HepG2 (cell line): ENCODE measurements at regions of chr3 and their contacts with region 1.

Region 1: GRCh38 chr3:172601066-172601832 is 78.0 kb upstream of the TNFSF10 start:
- DNase-seq: peak; percentile 87
- ATAC-seq: peak; percentile 99
- H3K4me3 ChIP-seq: peak overlapping the region; percentile 24 to 55 (median 40); a peak in 4 of 6 replicates
- H3K27ac ChIP-seq: peak overlapping the region; percentile 86
- H3K4me1 ChIP-seq: peaks cover 38% of the 10 kb centered on the region
- H3K27me3 ChIP-seq: no peaks in the 10 kb centered on the region
- CTCF ChIP-seq: no peak
- EP300 ChIP-seq: peak in 1 of 2 experiments; percentile 76; a peak in 2 of 4 replicates
- POLR2A ChIP-seq: peak in 1 of 2 experiments; percentile 32; a peak in 1 of 4 replicates
- RAD21 ChIP-seq: no peak

Region 2: DNA sequence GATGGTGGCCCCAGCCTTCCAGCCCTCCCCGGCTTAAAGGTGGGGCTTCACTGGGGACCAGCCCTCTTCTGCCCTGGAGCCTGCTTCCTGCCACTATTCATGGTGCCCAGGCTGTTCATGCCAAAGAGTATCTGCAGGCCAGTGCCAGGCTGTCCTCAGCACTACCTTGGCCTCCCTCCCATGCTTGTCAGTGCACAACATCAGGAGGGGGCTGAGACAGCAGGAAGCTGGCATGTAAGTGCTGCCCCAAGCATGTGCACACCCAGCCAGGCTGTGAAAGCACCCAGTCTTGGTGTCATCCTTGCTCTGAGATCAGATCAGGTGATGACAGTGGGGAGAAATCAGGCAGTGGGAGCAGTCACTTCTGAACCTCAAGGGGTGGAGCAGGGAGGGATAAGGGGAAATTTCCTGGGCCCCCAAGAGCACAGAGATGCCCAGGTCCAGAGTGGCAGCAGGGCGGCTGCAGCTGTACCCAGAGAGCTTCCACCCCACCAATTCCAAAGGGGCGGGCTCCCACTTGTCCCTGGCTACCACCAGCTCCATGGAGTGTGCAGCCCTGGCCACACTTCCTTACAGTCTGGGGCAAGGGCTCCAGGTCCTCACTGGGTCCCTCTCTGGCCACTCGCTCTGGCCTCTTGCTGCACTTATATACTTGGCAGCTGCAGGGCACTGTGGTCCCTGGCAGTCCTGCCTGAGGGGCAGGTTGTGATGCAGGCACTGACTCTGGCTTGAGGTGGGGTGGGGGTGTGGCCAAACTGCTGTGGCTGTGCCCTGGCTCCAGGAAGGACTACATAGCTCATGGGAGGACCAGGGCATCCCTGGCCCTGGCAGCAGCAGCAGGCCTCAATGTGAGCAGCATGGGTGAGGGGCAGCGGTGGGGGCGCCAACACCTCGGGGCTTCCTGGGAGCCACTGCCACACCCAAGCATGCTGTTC is 13.4 kb after region 1 on chr3:
- CTCF ChIA-PET with region 1: no interaction called
- POLR2A ChIA-PET with region 1: interaction called, 20 read pairs
- in situ Hi-C with region 1: no loop called
- intact Hi-C with region 1: loop called (anchors 1 kb)
- DNase-seq: no peak
- ATAC-seq: peak; percentile 26
- H3K4me3 ChIP-seq: no peak overlapping the region
- H3K27ac ChIP-seq: no peak overlapping the region
- H3K4me1 ChIP-seq: peaks cover 48% of the 10 kb centered on the region
- H3K27me3 ChIP-seq: no peaks in the 10 kb centered on the region
- CTCF ChIP-seq: no peak
- EP300 ChIP-seq: no peak
- POLR2A ChIP-seq: no peak
- RAD21 ChIP-seq: no peak